Left colon (tissue), 2 donors: ENCODE measurements at regions of chr6 and their contacts with region 1.

Region 1: GRCh38 chr6:75376347-75377024 is 91.9 kb upstream of the TMEM30A start:
- DNase-seq: no peak
- ATAC-seq: no peak

Region 2: GRCh38 chr6:75488033-75488432 is 111.5 kb after region 1 on chr6:
- intact Hi-C with region 1: loop called in 1 of 2 experiments (anchors 10 kb)
- DNase-seq: no peak
- ATAC-seq: no peak